SK-N-SH (cell line): ENCODE measurements at regions of chr17 and their contacts with region 1.

Region 1: DNA sequence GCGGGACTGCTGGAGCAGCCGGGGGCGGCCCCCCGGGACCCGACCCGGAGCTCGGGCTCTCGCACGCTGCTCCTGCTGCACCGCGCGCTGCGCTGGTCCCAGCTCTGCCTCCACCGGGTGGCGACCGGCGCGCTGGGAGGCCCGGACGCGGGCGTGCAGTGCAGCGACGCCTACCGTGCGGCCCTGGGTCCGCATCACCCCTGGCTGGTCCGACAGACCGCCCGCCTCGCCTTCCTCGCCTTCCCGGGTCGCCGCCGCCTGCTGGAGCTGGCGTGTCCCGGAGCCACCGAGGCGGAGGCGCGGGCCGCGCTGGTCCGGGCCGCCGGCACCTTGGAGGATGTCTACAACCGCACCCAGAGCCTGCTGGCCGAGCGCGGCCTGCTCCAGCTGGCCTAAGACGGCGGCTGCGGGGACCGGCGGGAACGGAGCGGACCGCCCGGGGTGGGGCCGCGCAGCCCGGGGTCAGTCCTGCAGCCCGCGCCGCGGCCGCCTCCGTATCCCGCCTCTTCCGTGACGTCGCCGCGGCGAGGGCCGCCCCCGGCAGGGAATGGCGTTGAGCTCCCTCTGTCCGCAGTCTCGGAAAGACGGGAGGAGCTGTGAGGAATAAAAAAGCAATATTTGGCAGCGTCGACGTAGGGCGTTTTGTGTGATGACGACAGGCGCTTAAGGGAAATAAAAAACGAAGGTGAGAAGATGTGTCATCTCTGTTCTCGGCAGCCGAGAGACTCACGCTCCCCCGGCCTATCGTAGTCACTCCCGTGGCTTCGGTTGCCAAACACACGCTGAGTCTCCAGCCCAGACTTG is 1.3 kb downstream of the GLTPD2 start:
- DNase-seq: peak; percentile 98
- H3K4me3 ChIP-seq: peak overlapping the region; percentile 59 to 79
- H3K27ac ChIP-seq: peak overlapping the region; percentile 70 to 82
- H3K4me1 ChIP-seq: peaks cover 8 to 19% of the 10 kb centered on the region in 2 experiments; a peak in 2 of 4 replicates
- H3K27me3 ChIP-seq: no peaks in the 10 kb centered on the region
- CTCF ChIP-seq: peak; percentile 58
- EP300 ChIP-seq: no peak
- RAD21 ChIP-seq: peak; percentile 39

Region 2: GRCh38 chr17:4304417-4305027 is 485.6 kb before region 1 on chr17:
- CTCF ChIA-PET with region 1: no interaction called
- POLR2A ChIA-PET with region 1: no interaction called
- DNase-seq: peak; percentile 68
- H3K4me3 ChIP-seq: peak overlapping the region in 1 of 2 experiments; percentile 20; a peak in 1 of 4 replicates
- H3K27ac ChIP-seq: 0 out of 4 replicates have a peak overlapping the region, but pooled peaks of 1 of the 2 experiments have one; percentile 8
- H3K4me1 ChIP-seq: no peaks in the 10 kb centered on the region; a peak in 1 of 4 replicates
- H3K27me3 ChIP-seq: no peaks in the 10 kb centered on the region
- CTCF ChIP-seq: peak; percentile 93
- EP300 ChIP-seq: no peak
- RAD21 ChIP-seq: peak; percentile 56

Region 3: DNA sequence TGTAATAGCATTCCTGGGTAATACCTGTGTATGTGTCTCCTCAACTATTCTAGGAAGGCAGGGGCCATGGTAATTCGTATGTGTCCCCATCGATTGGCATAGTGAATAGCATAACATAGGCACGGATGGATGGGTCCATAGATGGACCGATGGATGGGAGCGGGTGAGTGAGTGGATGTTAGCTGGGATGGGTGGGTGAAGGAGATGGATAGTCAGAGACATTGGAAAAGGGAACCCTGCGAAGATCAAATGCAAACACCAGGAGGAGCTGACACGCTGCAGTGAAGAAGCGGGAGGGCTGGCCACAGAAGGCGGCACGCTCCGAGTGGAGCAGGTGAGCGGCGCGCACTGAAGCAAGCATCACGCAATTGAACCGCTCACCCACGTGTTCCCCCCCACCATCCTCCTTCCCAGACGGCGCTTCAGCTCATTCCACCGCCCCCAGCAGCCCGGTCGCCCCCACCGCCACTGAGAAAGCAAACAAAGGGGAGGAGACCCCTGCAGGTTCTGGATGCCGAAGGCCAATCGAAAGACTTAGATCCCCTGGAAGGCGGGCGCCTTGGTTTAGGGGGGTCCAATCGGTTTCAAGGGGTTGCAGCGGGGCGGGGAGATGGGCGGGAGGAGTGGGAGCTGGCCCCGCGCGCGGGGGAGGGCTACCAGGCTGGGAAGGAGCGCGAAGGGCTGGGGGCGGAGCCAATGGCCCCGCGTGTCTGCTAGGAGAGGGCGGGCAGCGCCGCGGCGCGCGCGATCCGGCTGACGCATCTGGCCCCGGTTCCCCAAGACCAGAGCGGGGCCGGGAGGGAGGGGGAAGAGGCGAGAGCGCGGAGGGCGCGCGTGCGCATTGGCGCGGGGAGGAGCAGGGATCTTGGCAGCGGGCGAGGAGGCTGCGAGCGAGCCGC is 80.1 kb before region 1 on chr17 and contains the start of gene ARRB2:
- CTCF ChIA-PET with region 1: interaction called, 20 read pairs
- POLR2A ChIA-PET with region 1: no interaction called
- DNase-seq: peak; percentile 99
- H3K4me3 ChIP-seq: peak within 1 kb of the TSS; percentile 60 to 69
- H3K27ac ChIP-seq: peak within 1 kb of the TSS; percentile 62 to 76
- H3K4me1 ChIP-seq: peaks cover 0 to 20% of the 10 kb centered on the region in 2 experiments; a peak in 1 of 4 replicates
- H3K27me3 ChIP-seq: no peaks in the 10 kb centered on the region
- CTCF ChIP-seq: peak; percentile 64
- EP300 ChIP-seq: no peak
- RAD21 ChIP-seq: peak; percentile 63
- polyA plus RNA-seq, gene ARRB2: 17.3 and 24.6 TPM in 2 replicates

Region 4: GRCh38 chr17:4806777-4807604 is 16.9 kb after region 1 on chr17 and contains the start of gene PLD2:
- CTCF ChIA-PET with region 1: interaction called, 10 read pairs
- POLR2A ChIA-PET with region 1: interaction called, 10 read pairs
- DNase-seq: peak; percentile 100
- H3K4me3 ChIP-seq: peak within 1 kb of the TSS; percentile 63 to 92
- H3K27ac ChIP-seq: peak within 1 kb of the TSS in 1 of 2 experiments; percentile 41; a peak in 2 of 4 replicates
- H3K4me1 ChIP-seq: peaks cover 0 to 8% of the 10 kb centered on the region in 2 experiments; a peak in 1 of 4 replicates
- H3K27me3 ChIP-seq: no peaks in the 10 kb centered on the region
- CTCF ChIP-seq: no peak
- EP300 ChIP-seq: no peak
- RAD21 ChIP-seq: no peak
- polyA plus RNA-seq, gene PLD2: 42.5 and 49.2 TPM in 2 replicates

Region 5: GRCh38 chr17:4881761-4882555 is 91.9 kb after region 1 on chr17:
- CTCF ChIA-PET with region 1: interaction called, 235 read pairs
- POLR2A ChIA-PET with region 1: no interaction called
- DNase-seq: peak; percentile 76
- H3K4me3 ChIP-seq: peak overlapping the region in 1 of 2 experiments; percentile 50; a peak in 1 of 4 replicates
- H3K27ac ChIP-seq: no peak overlapping the region
- H3K4me1 ChIP-seq: no peaks in the 10 kb centered on the region
- H3K27me3 ChIP-seq: no peaks in the 10 kb centered on the region
- CTCF ChIP-seq: peak; percentile 91
- EP300 ChIP-seq: no peak
- RAD21 ChIP-seq: peak; percentile 78

Region 6: GRCh38 chr17:4920351-4921048 is 130.4 kb after region 1 on chr17:
- CTCF ChIA-PET with region 1: interaction called, 10 read pairs
- POLR2A ChIA-PET with region 1: no interaction called
- DNase-seq: no peak
- H3K4me3 ChIP-seq: no peak overlapping the region
- H3K27ac ChIP-seq: no peak overlapping the region
- H3K4me1 ChIP-seq: no peaks in the 10 kb centered on the region; a peak in 1 of 4 replicates
- H3K27me3 ChIP-seq: no peaks in the 10 kb centered on the region
- CTCF ChIP-seq: no peak
- EP300 ChIP-seq: no peak
- RAD21 ChIP-seq: no peak